BJ (cell line): ENCODE measurements at regions of chr4 and their contacts with region 1.

Region 1: GRCh38 chr4:56311299-56312186 is 75.7 kb downstream of the AASDH start:
- DNase-seq: no peak
- H3K4me3 ChIP-seq: no peak overlapping the region
- H3K27me3 ChIP-seq: no peaks in the 10 kb centered on the region; the same call in 1 of the 2 replicates
- CTCF ChIP-seq: no peak

Region 2: GRCh38 chr4:56158483-56158882 is 153.1 kb before region 1 on chr4:
- CTCF ChIA-PET with region 1: no interaction called
- POLR2A ChIA-PET with region 1: no interaction called
- DNase-seq: no peak
- H3K4me3 ChIP-seq: no peak overlapping the region
- H3K27me3 ChIP-seq: no peaks in the 10 kb centered on the region
- CTCF ChIP-seq: no peak

Region 3: DNA sequence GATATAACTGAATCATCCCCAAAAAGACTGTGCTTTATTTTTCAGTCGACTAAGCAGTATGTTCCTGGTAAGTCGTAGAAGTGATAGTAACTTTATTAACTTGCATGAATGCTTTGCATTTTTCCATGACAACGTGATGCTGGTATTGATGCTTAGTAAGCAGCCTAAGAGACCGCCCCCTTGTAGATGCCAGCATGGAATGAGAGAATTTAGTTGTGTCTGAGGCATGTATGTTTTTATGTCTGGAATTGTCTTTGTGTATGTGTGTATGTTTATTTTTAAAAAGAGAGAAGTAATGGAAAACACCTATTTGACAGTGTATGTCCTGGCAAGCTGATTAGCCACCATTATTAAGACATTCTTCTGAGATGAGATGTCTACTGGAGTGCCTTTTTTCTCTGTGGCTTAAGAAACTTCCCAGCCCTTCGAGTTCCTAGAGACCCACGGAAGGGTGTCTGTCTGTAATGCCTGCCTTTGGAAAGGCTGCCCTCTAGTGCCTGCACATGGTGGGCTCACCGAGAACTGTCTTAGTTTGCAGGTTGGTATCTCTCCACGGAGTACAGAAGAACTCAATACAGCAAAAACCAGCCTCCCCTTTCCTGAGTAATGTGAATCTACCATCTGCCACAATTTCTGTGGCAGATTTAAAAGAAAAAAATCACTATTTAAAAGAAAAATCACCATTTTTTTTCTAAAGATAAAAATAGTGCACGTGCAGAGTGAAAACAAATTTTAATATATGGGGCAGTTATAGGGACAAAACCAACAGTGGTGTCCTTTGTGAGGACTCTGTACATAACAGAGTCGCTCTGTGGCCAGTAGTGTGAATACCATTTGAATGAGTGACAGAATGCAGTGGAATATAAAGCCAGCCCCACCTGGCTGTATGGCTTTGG is 10.1 kb before region 1 on chr4:
- CTCF ChIA-PET with region 1: interaction called, 13 read pairs
- POLR2A ChIA-PET with region 1: no interaction called
- DNase-seq: peak; percentile 35
- H3K4me3 ChIP-seq: no peak overlapping the region
- H3K27me3 ChIP-seq: no peaks in the 10 kb centered on the region
- CTCF ChIP-seq: peak; percentile 91